GM12878 (cell line): ENCODE measurements at regions of chr2 and their contacts with region 1.

Region 1: GRCh38 chr2:72887754-72888437 is 688 bp downstream of the SPR start:
- DNase-seq: no peak
- ATAC-seq: peak; percentile 68
- H3K4me3 ChIP-seq: peak overlapping the region; percentile 75
- H3K27ac ChIP-seq: no peak overlapping the region
- H3K4me1 ChIP-seq: peaks cover under 1% of the 10 kb centered on the region
- H3K27me3 ChIP-seq: peaks cover 2 to 10% of the 10 kb centered on the region in 2 experiments; a peak in 2 of 4 replicates
- CTCF ChIP-seq: peak; percentile 82 to 95 (median 93)
- EP300 ChIP-seq: no peak
- POLR2A ChIP-seq: no peak
- RAD21 ChIP-seq: 0 out of 2 replicates have a peak, but pooled peaks have one; percentile 26

Region 2: GRCh38 chr2:72781480-72781879 is 106.4 kb before region 1 on chr2:
- CTCF ChIA-PET with region 1: no interaction called
- POLR2A ChIA-PET with region 1: no interaction called
- RAD21 ChIA-PET with region 1: no interaction called
- SMC1A ChIA-PET with region 1: no interaction called
- in situ Hi-C with region 1: no loop called
- intact Hi-C with region 1: no loop called
- DNase-seq: no peak
- ATAC-seq: no peak
- H3K4me3 ChIP-seq: no peak overlapping the region
- H3K27ac ChIP-seq: no peak overlapping the region
- H3K4me1 ChIP-seq: no peaks in the 10 kb centered on the region
- H3K27me3 ChIP-seq: no peaks in the 10 kb centered on the region
- CTCF ChIP-seq: no peak
- EP300 ChIP-seq: no peak
- POLR2A ChIP-seq: no peak
- RAD21 ChIP-seq: no peak

Region 3: DNA sequence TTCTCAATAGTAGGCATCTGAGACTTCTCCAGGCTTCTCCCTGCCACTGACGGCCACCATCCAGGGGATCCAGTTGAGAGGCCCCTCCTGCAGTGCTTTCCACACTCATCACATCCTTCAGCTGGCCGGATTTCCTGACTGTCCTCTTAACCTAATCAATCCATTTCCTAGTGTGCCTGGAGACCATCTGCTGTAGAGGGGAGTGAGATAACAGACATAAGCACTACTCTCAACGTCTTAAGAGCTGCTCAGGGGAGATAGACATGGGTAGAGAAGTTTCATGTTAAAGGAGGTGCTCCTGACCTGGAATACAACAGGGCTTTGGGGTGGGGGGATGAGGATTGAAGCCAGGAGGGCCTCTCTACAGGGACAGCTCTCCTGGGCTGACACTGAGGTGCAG is 13.5 kb after region 1 on chr2:
- CTCF ChIA-PET with region 1: interaction called, 57 read pairs
- POLR2A ChIA-PET with region 1: interaction called, 3 read pairs
- RAD21 ChIA-PET with region 1: no interaction called
- SMC1A ChIA-PET with region 1: interaction called, 14 read pairs
- in situ Hi-C with region 1: no loop called
- intact Hi-C with region 1: no loop called
- DNase-seq: no peak
- ATAC-seq: no peak
- H3K4me3 ChIP-seq: no peak overlapping the region
- H3K27ac ChIP-seq: no peak overlapping the region
- H3K4me1 ChIP-seq: no peaks in the 10 kb centered on the region
- H3K27me3 ChIP-seq: no peaks in the 10 kb centered on the region; a peak in 1 of 4 replicates
- CTCF ChIP-seq: no peak
- EP300 ChIP-seq: no peak
- POLR2A ChIP-seq: no peak
- RAD21 ChIP-seq: no peak

Region 4: DNA sequence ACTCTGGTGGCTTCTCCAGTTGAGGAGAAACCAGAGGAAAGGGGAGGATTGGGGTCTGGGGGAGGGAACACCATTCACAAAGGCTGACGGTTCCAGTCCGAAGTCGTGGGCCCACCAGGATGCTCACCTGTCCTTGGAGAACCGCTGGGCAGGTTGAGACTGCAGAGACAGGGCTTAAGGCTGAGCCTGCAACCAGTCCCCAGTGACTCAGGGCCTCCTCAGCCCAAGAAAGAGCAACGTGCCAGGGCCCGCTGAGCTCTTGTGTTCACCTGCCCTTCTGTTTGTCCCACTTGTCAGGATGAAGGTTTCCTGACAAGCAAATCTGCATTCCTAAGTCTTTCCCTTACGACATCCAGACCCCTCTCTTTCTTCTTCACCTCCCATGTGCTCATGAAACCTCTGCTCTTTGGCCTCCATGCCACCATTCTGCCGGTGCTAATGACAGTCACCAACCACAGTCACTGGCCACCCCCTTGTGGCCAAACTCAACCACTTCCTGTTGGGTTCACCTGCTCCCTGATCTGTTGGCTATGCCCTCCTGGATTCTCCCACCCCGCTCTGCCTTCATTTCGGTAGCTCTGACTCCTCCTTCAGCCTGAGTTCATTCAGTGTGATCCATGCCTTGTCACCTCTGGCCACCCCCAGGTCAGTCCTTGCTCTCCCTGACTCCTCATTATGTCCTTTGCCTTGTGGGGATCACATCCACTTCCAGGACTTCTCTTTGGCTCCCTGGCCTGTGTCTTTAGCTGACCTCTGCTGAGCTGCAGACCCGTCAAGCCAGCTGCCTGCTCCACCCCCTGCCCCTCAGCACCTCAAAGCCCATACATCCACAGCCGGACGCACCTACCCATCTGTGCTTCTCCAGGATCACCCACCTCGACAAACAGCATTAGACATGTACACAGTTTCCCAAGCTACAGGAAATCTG is 47.1 kb after region 1 on chr2:
- CTCF ChIA-PET with region 1: interaction called, 117 read pairs
- POLR2A ChIA-PET with region 1: no interaction called
- RAD21 ChIA-PET with region 1: interaction called, 51 read pairs
- SMC1A ChIA-PET with region 1: interaction called, 39 read pairs
- in situ Hi-C with region 1: no loop called
- intact Hi-C with region 1: loop called (anchors 1 kb)
- DNase-seq: no peak
- ATAC-seq: peak; percentile 88
- H3K4me3 ChIP-seq: no peak overlapping the region
- H3K27ac ChIP-seq: no peak overlapping the region
- H3K4me1 ChIP-seq: no peaks in the 10 kb centered on the region; the same call in 1 of the 2 replicates
- H3K27me3 ChIP-seq: no peaks in the 10 kb centered on the region; a peak in 1 of 4 replicates
- CTCF ChIP-seq: peak; percentile 38 to 63 (median 40); a peak in 5 of 6 replicates
- EP300 ChIP-seq: no peak
- POLR2A ChIP-seq: no peak
- RAD21 ChIP-seq: peak; percentile 67

Region 5: DNA sequence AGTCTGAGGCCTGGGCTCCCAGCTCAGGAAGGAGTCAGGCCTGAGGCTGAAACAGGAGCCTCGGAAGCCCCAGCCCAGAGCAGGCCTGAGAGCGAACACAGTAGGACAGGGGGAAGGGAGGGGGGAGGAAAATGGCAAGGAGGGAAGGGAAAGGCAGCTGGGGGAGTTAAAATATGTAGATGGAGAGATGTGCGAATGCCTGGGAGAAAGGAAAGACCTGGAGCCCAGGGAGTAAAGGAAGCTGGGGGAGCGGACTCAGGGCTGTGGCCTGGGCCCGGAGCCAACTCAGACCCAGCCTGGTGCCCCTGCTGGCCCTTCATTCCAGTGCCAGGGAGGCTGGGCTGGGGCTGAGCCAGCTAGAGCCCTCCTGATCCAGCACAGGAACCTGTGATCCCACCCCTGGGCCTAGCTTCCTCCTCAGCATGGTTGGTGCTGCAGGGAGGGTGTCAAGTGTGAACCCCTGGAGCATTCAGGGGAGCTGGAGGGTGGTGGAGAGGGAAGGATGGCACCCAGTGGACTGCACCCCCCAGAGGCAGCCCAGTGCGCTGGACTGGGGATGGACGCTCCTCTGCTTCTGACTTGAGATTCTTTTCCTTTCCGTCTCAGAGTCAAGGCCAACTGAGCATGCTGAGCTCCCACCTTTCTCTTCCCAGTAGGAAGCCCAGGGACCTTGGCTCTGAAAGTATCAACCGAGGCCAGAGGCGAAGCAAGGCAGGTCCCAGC is 75.7 kb after region 1 on chr2:
- CTCF ChIA-PET with region 1: interaction called, 437 read pairs
- POLR2A ChIA-PET with region 1: no interaction called
- RAD21 ChIA-PET with region 1: no interaction called
- SMC1A ChIA-PET with region 1: no interaction called
- in situ Hi-C with region 1: no loop called
- intact Hi-C with region 1: no loop called
- DNase-seq: no peak
- ATAC-seq: no peak
- H3K4me3 ChIP-seq: no peak overlapping the region
- H3K27ac ChIP-seq: no peak overlapping the region
- H3K4me1 ChIP-seq: no peaks in the 10 kb centered on the region
- H3K27me3 ChIP-seq: no peaks in the 10 kb centered on the region; a peak in 1 of 4 replicates
- CTCF ChIP-seq: no peak
- EP300 ChIP-seq: no peak
- POLR2A ChIP-seq: no peak
- RAD21 ChIP-seq: no peak

Region 6: GRCh38 chr2:73071360-73072133 is 183.7 kb after region 1 on chr2 and contains the start of gene SFXN5:
- CTCF ChIA-PET with region 1: interaction called, 6 read pairs
- POLR2A ChIA-PET with region 1: no interaction called
- RAD21 ChIA-PET with region 1: no interaction called
- SMC1A ChIA-PET with region 1: interaction called, 4 read pairs
- in situ Hi-C with region 1: no loop called
- intact Hi-C with region 1: loop called (anchors 5 kb)
- DNase-seq: peak; percentile 40
- ATAC-seq: peak; percentile 95
- H3K4me3 ChIP-seq: peak within 1 kb of the TSS; percentile 77
- H3K27ac ChIP-seq: peak within 1 kb of the TSS; percentile 86
- H3K4me1 ChIP-seq: no peaks in the 10 kb centered on the region
- H3K27me3 ChIP-seq: peaks cover 0 to under 1% of the 10 kb centered on the region in 2 experiments; a peak in 2 of 4 replicates
- CTCF ChIP-seq: 0 out of 6 replicates have a peak, but pooled peaks of 2 of the 3 experiments have one; percentile 7 to 28
- EP300 ChIP-seq: peak in 1 of 2 experiments; percentile 17; a peak in 1 of 4 replicates
- POLR2A ChIP-seq: peak; percentile 77
- RAD21 ChIP-seq: no peak
- polyA plus RNA-seq, gene SFXN5: 3.3 to 4.0 TPM

Region 7: DNA sequence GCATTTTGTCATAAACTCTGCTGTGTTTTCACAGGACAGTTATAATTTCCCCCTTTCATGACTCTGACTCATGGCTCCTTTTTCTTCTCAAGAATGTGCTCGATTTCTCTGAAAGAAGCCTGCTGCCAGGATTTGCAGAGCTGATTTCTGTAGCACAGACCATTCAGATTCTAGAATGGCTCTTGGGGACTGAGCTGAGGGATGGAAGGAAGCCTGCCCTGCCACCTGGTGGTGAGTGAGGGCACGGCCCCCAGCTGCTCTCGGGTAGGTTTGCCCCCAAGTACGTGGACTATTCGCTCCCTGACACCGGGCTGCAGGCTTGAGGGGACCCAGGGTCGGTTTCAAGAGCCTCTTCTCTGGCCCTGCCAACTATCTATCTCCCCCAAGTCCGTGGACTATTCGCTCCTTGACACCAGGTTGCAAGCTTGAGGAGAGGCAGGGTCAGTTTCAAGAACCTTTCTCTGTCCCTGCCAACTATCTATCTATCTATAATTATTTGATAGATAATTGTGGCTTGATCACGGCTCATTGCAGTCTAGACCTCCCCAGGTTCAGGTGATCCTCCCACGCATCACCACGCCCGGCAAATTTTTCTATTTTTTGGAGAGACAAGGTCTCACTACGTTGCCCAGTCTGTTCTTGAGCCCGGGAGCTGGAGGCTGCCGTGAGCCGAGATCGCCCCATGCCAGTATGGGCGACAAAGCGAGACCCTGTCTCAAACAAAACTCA is 324.7 kb after region 1 on chr2:
- CTCF ChIA-PET with region 1: interaction called, 21 read pairs
- POLR2A ChIA-PET with region 1: interaction called, 3 read pairs
- RAD21 ChIA-PET with region 1: interaction called, 3 read pairs
- SMC1A ChIA-PET with region 1: no interaction called
- in situ Hi-C with region 1: no loop called
- intact Hi-C with region 1: no loop called
- DNase-seq: no peak
- ATAC-seq: peak; percentile 86
- H3K4me3 ChIP-seq: no peak overlapping the region
- H3K27ac ChIP-seq: no peak overlapping the region
- H3K4me1 ChIP-seq: peaks cover 8% of the 10 kb centered on the region
- H3K27me3 ChIP-seq: no peaks in the 10 kb centered on the region
- CTCF ChIP-seq: peak; percentile 88 to 97 (median 96)
- EP300 ChIP-seq: no peak
- POLR2A ChIP-seq: no peak
- RAD21 ChIP-seq: peak; percentile 63

Region 8: GRCh38 chr2:73614105-73614504 is 726.2 kb after region 1 on chr2:
- CTCF ChIA-PET with region 1: no interaction called
- POLR2A ChIA-PET with region 1: no interaction called
- RAD21 ChIA-PET with region 1: no interaction called
- SMC1A ChIA-PET with region 1: no interaction called
- in situ Hi-C with region 1: no loop called
- intact Hi-C with region 1: no loop called
- DNase-seq: no peak
- ATAC-seq: peak; percentile 71
- H3K4me3 ChIP-seq: no peak overlapping the region
- H3K27ac ChIP-seq: no peak overlapping the region
- H3K4me1 ChIP-seq: peaks cover 4% of the 10 kb centered on the region
- H3K27me3 ChIP-seq: no peaks in the 10 kb centered on the region
- CTCF ChIP-seq: no peak
- EP300 ChIP-seq: no peak
- POLR2A ChIP-seq: no peak
- RAD21 ChIP-seq: no peak